Thyroid gland (tissue), 4 donors: ENCODE measurements at regions of chr9 and their contacts with region 1.

Region 1: DNA sequence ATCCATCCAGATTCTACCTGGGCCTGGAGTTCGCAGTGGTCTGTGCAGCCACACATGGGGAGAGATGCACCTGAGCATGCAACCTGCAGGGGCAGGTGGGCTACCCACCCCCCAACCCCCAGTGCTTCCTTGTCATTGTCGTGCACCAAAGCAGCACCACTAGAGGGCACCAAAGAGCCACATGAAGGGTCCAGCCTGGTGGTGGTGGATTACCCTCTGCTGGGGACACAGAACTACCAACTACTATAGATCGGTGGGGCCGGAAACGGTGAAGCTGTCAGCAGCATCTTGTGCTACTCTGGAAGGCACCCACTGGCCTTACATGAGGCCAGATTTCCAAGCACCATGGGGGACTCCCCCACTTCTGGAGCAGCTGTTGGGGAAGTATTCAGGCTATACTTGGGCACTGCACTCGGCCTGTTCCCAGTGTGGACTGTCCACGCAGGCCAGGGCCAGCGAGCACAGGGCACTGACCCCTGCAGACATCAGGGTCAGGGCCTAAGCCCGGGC is 60.2 kb upstream of the TBC1D2 start:
- DNase-seq: peak; percentile 83 to 87
- H3K4me3 ChIP-seq: no peak overlapping the region
- H3K27ac ChIP-seq: no peak overlapping the region
- H3K4me1 ChIP-seq: no peaks in the 10 kb centered on the region
- H3K27me3 ChIP-seq: no peaks in the 10 kb centered on the region
- CTCF ChIP-seq: peak; percentile 74 to 95 (median 94)
- POLR2A ChIP-seq: no peak

Region 2: GRCh38 chr9:98075325-98075805 is 240.2 kb before region 1 on chr9:
- intact Hi-C with region 1: no loop called
- DNase-seq: no peak
- H3K4me3 ChIP-seq: no peak overlapping the region
- H3K27ac ChIP-seq: no peak overlapping the region
- H3K4me1 ChIP-seq: peaks cover 0 to 7% of the 10 kb centered on the region in 2 donors
- H3K27me3 ChIP-seq: no peaks in the 10 kb centered on the region
- CTCF ChIP-seq: no peak
- POLR2A ChIP-seq: no peak

Region 3: GRCh38 chr9:98271479-98271878 is 44.1 kb before region 1 on chr9:
- intact Hi-C with region 1: no loop called
- DNase-seq: no peak
- H3K4me3 ChIP-seq: no peak overlapping the region
- H3K27ac ChIP-seq: no peak overlapping the region
- H3K4me1 ChIP-seq: no peaks in the 10 kb centered on the region
- H3K27me3 ChIP-seq: no peaks in the 10 kb centered on the region
- CTCF ChIP-seq: no peak
- POLR2A ChIP-seq: no peak

Region 4: DNA sequence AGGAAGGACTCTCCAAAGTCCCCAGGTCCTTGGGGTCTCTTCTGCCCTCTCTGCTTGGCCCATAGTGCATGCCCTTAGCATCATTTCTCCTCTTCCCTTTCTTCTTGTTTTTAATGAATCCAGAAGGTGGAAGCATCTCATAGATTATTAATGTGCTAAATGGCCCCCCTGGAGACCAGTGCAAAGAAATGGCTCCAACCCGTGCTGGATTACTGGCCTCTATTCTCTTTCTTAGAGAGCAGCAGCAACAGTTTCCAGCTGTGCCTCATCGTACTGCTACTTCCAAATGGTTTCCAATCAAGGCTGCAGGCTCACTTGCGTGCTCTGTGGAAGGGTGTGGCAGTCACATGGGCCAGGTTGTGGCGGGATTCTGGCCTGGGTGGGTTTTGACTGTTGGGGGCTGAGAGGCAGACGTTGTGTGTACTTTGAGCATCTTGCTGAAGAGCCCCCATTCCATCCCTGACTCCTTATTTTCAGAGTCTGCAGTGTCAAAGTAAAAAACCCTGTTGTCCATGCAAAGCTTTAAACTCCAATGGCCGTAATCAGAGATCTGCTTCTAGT is 253.4 kb after region 1 on chr9:
- intact Hi-C with region 1: loop called (anchors 10 kb)
- DNase-seq: no peak
- H3K4me3 ChIP-seq: no peak overlapping the region
- H3K27ac ChIP-seq: no peak overlapping the region
- H3K4me1 ChIP-seq: peaks cover 0 to 6% of the 10 kb centered on the region in 2 donors
- H3K27me3 ChIP-seq: no peaks in the 10 kb centered on the region
- CTCF ChIP-seq: no peak
- POLR2A ChIP-seq: no peak

Region 5: DNA sequence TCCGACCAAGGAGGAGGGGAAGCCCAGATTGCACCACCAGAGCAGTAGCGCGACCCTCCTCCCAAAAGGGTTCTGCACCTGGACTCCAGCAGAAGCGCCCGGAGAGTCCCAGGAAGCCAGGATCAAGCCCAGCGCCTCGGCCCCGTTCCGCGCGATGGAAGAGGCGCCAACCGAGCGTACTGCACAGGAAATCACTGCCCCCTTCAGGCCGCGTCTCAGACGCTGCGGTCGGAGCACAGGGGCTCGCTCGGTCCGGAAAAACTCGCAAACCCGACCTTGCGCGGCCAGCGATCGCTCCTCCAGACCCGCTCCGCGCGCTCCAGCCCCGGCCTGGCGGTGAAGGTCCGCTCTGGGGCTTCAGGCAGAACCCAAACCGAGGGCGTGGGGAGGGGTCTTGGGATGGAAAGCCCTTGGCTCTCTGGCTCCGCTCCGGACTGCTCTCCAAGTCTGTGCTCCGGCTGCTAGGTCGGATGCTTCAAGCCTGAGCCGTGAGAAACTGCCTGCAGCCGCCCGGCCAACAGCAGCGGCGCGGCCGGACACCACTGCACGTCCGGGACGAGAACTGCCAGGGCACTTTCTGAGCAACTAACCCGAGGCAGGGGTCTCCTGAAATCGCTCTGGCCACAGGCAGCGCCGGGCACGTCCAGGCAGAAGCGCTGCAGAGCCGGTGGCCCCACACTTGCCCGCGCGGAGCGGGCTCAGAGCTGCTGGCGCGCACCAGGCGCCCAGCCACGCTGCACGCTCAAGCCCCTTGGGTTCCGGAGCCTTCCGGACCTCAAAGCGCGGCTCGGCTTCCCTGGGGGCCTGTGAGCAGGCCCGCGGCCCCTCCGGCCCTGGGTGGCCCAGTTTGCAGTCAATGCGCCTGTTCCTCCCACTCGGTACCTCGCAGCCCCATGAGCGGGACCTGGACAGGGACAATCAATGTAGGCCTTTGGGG is 391.8 kb after region 1 on chr9:
- intact Hi-C with region 1: loop called (anchors 5 kb)
- DNase-seq: peak; percentile 83 to 89
- H3K4me3 ChIP-seq: no peak overlapping the region
- H3K27ac ChIP-seq: no peak overlapping the region
- H3K4me1 ChIP-seq: peaks cover 6 to 19% of the 10 kb centered on the region in 2 donors
- H3K27me3 ChIP-seq: peaks cover 4% of the 10 kb centered on the region
- CTCF ChIP-seq: peak; percentile 21 to 79 (median 64)
- POLR2A ChIP-seq: no peak

Region 6: GRCh38 chr9:98781588-98782383 is 466.2 kb after region 1 on chr9:
- intact Hi-C with region 1: loop called (anchors 10 kb)
- DNase-seq: peak in 1 of 2 donors; percentile 30
- H3K4me3 ChIP-seq: no peak overlapping the region
- H3K27ac ChIP-seq: no peak overlapping the region
- H3K4me1 ChIP-seq: peaks cover 3 to 19% of the 10 kb centered on the region in 2 donors
- H3K27me3 ChIP-seq: no peaks in the 10 kb centered on the region
- CTCF ChIP-seq: no peak
- POLR2A ChIP-seq: no peak